Activated T-helper 2 cell treated with anti-CD3 and anti-CD28 coated beads, Interferon-gamma antibody, Interleukin-2, Interleukin-4, amounts not matched to agents 10 μg/mL and 5 μg/mL and 100 μg/mL, durations not matched to agents 14 hours and 24 hours and 36 hours (primary cell): ENCODE measurements at regions of chr20 and their contacts with region 1.

Region 1: DNA sequence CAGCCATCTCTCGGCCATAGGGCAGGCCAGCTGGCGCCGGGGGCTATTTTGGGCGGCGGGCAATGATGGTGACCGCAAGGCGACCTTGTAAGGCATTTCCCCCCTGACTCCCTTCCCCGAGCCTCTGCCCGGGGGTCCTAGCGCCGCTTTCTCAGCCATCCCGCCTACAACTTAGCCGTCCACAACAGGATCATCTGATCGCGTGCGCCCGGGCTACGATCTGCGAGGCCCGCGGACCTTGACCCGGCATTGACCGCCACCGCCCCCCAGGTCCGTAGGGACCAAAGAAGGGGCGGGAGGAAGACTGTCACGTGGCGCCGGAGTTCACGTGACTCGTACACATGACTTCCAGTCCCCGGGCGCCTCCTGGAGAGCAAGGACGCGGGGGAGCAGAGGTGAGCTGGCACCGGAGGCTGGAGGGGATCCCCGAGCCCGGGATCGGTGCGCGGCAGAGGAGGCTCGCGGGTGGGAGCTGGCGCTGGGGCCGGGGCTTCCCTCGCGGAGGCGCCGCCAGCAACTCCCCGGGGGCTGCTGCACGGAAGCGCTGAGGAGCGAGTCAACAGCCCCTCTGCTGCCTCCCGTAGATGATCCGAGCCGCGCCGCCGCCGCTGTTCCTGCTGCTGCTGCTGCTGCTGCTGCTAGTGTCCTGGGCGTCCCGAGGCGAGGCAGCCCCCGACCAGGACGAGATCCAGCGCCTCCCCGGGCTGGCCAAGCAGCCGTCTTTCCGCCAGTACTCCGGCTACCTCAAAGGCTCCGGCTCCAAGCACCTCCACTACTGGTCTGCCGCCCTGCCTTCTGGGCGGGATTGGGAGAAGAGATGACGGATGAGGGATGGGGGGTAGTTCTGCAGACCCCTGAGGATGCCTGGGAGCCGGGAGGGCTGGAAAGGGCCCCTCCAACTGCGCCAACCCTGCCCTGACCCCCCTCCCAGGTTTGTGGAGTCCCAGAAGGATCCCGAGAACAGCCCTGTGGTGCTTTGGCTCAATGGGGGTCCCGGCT is at the starts of genes CTSA and NEURL2:
- DNase-seq: peak; percentile 78
- H3K4me3 Mint-ChIP-seq: peak within 1 kb of the TSS; percentile 87
- H3K27ac Mint-ChIP-seq: peak within 1 kb of the TSS; percentile 84
- H3K4me1 Mint-ChIP-seq: peaks cover 25% of the 10 kb centered on the region
- H3K27me3 Mint-ChIP-seq: no peaks in the 10 kb centered on the region
- total RNA-seq, gene CTSA: 49.0 and 51.9 TPM in 2 replicates
- total RNA-seq, gene NEURL2: 2.0 and 3.3 TPM in 2 replicates

Region 2: GRCh38 chr20:45812157-45813020 is 78.9 kb before region 1 on chr20 and contains the start of gene UBE2C:
- intact Hi-C with region 1: loop called (anchors 5 kb)
- DNase-seq: peak; percentile 96
- H3K4me3 Mint-ChIP-seq: peak within 1 kb of the TSS; percentile 90
- H3K27ac Mint-ChIP-seq: peak within 1 kb of the TSS; percentile 80
- H3K4me1 Mint-ChIP-seq: peaks cover 24% of the 10 kb centered on the region
- H3K27me3 Mint-ChIP-seq: no peaks in the 10 kb centered on the region
- total RNA-seq, gene UBE2C: 142 and 145 TPM in 2 replicates

Region 3: GRCh38 chr20:45910670-45911485 is 19.6 kb after region 1 on chr20:
- intact Hi-C with region 1: loop called (anchors 1 kb)
- DNase-seq: peak; percentile 89
- H3K4me3 Mint-ChIP-seq: peak overlapping the region; percentile 72
- H3K27ac Mint-ChIP-seq: peak overlapping the region; percentile 85
- H3K4me1 Mint-ChIP-seq: peaks cover 7% of the 10 kb centered on the region
- H3K27me3 Mint-ChIP-seq: peaks cover 6% of the 10 kb centered on the region